Posterior vena cava (tissue), 2 donors: ENCODE measurements at regions of chr1 and their contacts with region 1.

Region 1: GRCh38 chr1:7808253-7808844 is 24.3 kb downstream of the PER3 start:
- DNase-seq: no peak

Region 2: DNA sequence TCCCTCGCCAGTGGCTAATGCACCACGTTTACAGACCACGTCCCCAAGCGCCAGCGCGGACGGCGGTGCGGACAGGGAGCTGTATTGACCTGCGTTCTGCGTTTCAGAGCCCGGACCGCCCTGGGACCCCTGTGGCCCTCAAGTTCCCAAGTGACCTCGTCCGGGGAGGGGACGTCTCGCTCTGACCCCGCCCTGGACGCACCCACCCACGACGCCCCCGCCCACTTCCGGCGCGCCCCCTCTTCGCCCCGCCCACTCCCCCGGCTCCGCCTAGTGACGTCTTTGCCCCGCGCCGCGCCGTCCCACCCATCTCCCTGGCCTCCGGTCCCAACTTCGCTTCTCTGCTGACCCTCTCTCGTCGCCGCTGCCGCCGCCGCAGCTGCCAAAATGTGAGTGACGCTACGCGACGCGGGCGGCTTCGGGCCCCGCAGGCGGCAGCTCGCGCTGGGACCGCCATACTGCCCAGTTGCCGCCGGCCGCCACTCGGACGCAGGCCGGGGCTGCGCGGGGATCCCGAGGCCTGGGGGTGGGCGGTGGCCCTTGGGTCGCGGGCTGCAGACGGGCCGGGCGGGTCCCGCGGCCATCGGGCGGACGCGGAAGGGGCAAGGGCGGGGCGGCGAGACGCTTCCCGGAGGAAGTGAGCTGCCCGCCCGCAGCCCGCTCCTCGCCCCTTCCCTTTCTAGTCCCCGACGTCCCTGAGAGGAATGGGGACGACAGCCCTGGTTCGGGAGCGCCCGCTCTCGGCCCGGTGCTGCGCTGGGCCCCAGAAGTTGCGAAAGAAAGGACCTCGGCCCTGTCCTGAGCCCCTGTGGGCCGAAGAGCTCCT is 37.1 kb before region 1 on chr1 and contains the start of gene VAMP3:
- intact Hi-C with region 1: no loop called
- DNase-seq: peak; percentile 97
- total RNA-seq, gene VAMP3: 101 to 119 TPM

Region 3: GRCh38 chr1:7821282-7821681 is 12.9 kb after region 1 on chr1:
- intact Hi-C with region 1: loop called in 1 of 2 experiments (anchors 1 kb)
- DNase-seq: no peak

Region 4: GRCh38 chr1:7893529-7894180 is 85.3 kb after region 1 on chr1:
- intact Hi-C with region 1: loop called in 1 of 2 experiments (anchors 10 kb)
- DNase-seq: no peak

Region 5: GRCh38 chr1:7902478-7903085 is 94.2 kb after region 1 on chr1:
- intact Hi-C with region 1: loop called (anchors 10 kb)
- DNase-seq: peak; percentile 87